ENCODE measurements at regions of chr12 and their contacts with region 1.

Region 1: DNA sequence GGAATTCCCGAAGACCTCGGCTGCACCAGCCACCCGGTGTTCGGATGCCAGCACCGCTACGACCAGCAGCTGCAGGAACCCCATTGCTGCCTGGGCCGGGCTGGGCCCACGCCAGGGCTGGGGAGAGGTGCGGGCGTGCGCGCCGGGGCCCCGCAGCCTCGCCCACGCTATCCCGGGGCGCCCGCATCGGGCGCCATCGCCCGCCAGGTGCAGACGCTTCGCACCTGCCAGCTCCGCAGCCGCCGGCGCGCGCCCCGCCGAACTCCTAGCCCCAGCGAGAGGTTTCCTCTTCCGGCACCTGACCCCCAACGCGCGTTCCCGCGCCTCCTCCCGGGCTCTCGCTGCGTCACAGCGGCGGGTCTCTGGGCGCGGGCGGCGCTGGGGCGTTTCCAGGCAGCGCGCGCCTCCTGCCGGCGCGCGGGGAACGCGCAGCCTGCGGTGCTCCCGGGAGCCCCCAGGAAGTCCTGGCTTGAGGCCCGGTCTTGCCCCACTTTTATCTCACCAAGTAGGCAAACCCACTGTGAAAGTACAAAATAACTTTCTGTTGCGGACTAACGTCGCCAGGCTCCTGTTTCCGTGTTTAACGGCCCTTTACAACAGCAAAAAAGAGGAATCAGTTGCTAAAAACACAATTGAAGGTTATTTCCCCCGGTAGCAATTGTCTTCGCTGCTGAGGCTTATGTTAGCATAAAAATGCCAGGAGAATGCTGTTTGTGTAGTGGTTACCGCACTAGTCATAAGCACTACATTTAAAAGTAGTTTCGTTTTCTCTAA is at the start of gene TM7SF3:
- DNase-seq: peak; percentile 82 to 96
- H3K4me3 ChIP-seq: peak within 1 kb of the TSS; percentile 97 to 99
- H3K27ac ChIP-seq: peak within 1 kb of the TSS; percentile 88 to 92
- H3K4me1 ChIP-seq: peaks cover 3 to 34% of the 10 kb centered on the region in 2 donors
- H3K27me3 ChIP-seq: no peaks in the 10 kb centered on the region
- CTCF ChIP-seq: peak; percentile 71 to 97 (median 94)
- total RNA-seq, gene TM7SF3: 213 TPM

Region 2: GRCh38 chr12:26937875-26938700 is 76.2 kb before region 1 on chr12 and contains the starts of genes FGFR1OP2 and INTS13:
- intact Hi-C with region 1: loop called (anchors 1 kb)
- DNase-seq: peak; percentile 97 to 99
- H3K4me3 ChIP-seq: peak within 1 kb of the TSS; percentile 84 to 96
- H3K27ac ChIP-seq: peak within 1 kb of the TSS; percentile 88 to 99
- H3K4me1 ChIP-seq: peaks cover 4 to 37% of the 10 kb centered on the region in 2 donors
- H3K27me3 ChIP-seq: no peaks in the 10 kb centered on the region
- CTCF ChIP-seq: no peak
- total RNA-seq, gene FGFR1OP2: 34.3 TPM
- total RNA-seq, gene INTS13: 47.5 TPM

Region 3: DNA sequence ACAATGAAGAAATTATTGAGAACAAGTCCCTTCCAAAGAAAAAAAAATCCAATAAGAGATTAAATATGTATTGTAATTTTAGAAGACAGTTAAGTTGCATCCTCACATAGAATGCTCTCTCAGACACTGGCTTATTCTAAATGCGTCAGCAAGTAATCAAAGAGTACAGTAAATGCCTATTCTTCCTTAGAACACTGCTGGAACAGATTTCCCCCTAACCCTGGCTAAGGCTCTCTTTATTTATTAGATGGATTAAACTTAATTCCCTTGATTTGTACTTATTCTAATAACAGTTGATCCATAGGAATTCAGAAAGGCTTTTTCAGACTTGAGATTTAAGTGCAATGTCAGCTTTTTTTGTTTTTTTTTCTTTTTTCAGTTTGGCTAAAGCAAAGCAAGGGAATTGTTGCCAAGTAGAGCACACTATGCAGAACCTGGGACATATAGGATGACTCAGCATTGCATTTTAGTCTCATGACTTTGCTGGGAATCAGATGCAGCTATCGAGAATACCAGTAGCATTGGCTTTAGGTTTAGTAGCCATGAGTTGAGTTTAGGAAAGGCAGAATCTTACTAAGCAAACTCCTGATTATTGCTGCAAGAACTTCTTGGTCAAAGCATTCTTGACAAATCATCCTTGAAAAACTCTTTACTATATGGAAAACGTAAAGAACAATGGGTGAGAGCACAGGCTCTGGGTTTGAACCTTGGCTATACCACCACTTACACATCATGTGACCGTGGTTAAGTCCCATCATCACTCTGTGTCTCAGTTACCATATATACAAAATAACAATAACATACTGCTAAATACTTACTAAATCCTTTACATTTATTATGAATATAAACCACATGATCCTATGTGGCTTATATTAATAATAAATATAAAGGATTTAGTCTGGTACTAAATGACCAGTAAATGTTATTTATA is 34.8 kb after region 1 on chr12:
- intact Hi-C with region 1: no loop called
- DNase-seq: no peak
- H3K4me3 ChIP-seq: no peak overlapping the region
- H3K27ac ChIP-seq: no peak overlapping the region
- H3K4me1 ChIP-seq: no peaks in the 10 kb centered on the region
- H3K27me3 ChIP-seq: no peaks in the 10 kb centered on the region
- CTCF ChIP-seq: no peak

Region 4: GRCh38 chr12:27142101-27142721 is 127.9 kb after region 1 on chr12:
- intact Hi-C with region 1: loop called (anchors 2 kb)
- DNase-seq: peak in 1 of 2 donors; percentile 85
- H3K4me3 ChIP-seq: no peak overlapping the region
- H3K27ac ChIP-seq: no peak overlapping the region
- H3K4me1 ChIP-seq: peaks cover 0 to 15% of the 10 kb centered on the region in 2 donors
- H3K27me3 ChIP-seq: no peaks in the 10 kb centered on the region
- CTCF ChIP-seq: peak; percentile 63 to 83 (median 77)

Region 5: GRCh38 chr12:28035500-28035899 is 1021.2 kb after region 1 on chr12:
- intact Hi-C with region 1: no loop called
- DNase-seq: no peak
- H3K4me3 ChIP-seq: no peak overlapping the region
- H3K27ac ChIP-seq: no peak overlapping the region
- H3K4me1 ChIP-seq: no peaks in the 10 kb centered on the region
- H3K27me3 ChIP-seq: no peaks in the 10 kb centered on the region
- CTCF ChIP-seq: no peak

Measured in ascending aorta (tissue), 2 donors.